Left cardiac atrium (tissue), 4 donors: ENCODE measurements at regions of chr10 and their contacts with region 1.

Region 1: GRCh38 chr10:119041326-119041725 is 11.8 kb downstream of the NANOS1 start:
- DNase-seq: no peak
- ATAC-seq: no peak

Region 2: DNA sequence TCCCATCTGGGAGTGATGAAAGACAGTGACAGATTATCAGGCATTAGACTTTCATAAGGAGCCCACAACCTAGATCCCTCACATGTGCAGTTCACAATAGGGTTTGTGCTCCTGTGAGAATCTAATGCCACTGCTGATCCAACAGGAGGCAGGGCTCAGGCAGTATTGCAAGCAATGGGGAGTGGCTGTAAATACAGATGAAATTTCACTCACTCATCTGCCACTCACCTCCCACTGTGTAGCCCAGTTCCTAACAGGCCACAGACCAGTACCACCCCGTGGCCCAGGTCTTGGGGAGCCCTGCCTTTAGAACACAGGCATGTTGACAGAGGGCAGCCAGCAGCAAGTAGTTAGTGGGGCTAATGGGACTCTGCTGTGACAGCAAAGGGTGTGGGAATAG is 149.1 kb before region 1 on chr10:
- intact Hi-C with region 1: no loop called
- DNase-seq: no peak
- ATAC-seq: no peak

Region 3: DNA sequence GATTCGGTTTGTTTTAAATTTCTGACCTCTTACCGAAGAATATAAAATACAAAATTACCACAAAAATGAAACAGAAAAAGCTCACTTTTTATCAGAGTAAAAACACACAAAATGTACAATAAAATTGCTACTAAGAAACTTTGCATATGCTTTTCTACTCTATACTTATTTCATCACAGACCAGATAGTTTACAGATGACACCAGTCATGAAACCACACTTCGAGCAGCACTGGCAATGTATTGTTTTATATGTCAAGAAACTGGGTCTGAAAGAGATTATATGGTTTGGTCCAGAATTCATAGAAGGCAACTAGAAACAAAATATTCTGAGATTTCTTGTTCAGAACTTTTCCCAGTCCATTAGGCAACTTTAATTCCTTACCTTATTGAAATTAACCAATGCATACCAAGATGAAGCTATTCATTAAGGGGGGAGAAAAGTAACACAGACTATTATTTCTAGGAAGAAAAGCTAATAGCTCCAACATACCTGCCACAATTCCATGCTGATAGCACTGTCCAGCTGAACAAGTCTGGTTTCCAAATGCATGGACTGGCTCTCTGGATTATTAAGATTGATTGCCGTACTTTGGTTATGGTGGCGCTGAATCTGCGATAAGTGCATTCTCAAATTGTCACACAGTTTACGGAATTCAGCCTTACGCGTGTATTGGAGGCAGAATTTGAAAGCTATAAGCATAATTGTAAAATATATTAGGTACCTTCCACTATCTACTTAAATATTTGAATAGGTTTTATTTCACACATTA is 29.3 kb after region 1 on chr10:
- intact Hi-C with region 1: loop called in 1 of 2 experiments (anchors 5 kb)
- DNase-seq: no peak
- ATAC-seq: no peak

Region 4: GRCh38 chr10:119834188-119834587 is 792.9 kb after region 1 on chr10:
- intact Hi-C with region 1: loop called in 1 of 2 experiments (anchors 10 kb)
- DNase-seq: no peak
- ATAC-seq: no peak